Cardiac septum (tissue), 1 donor: ENCODE measurements at regions of chr20 and their contacts with region 1.

Region 1: GRCh38 chr20:59006864-59007664 is at the start of gene CTSZ:
- DNase-seq: peak; percentile 86
- total RNA-seq, gene CTSZ: 157 TPM

Region 2: DNA sequence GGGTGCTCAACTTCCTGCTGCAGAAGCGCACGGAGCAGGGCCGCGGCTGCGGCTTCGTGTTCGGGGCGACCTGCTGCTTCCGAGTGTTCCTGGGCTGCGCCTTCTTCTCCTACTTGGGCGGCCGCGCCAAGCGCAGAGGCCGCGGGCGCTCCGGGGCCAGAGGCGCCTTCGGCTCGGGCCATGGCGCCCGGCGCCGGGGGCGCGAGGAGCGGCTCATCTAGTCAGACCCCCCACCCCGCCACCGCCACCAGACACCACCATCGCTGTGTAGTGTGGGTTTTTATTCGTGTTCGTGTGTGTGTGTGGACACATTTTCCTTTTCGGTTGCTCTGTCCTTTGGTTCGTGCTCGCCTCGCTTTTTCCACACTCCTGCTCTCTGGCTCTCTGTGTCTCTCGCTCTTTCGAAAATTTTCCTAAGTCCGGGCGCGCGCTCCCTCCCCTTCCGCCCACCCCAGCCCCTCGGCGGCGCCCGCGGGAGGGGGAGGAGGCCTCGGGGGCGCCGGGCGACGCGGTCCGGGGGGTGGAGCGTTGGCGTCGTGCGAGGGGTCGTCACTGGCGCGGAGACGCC is 116.5 kb before region 1 on chr20:
- intact Hi-C with region 1: loop called (anchors 10 kb)
- DNase-seq: peak; percentile 88